Breast epithelium (tissue), 4 donors: ENCODE measurements at regions of chr14 and their contacts with region 1.

Region 1: GRCh38 chr14:29584992-29585391 is 342.7 kb downstream of the PRKD1 start:
- DNase-seq: no peak
- H3K4me3 ChIP-seq: no peak overlapping the region
- H3K27ac ChIP-seq: no peak overlapping the region
- H3K4me1 ChIP-seq: no peaks in the 10 kb centered on the region
- H3K27me3 ChIP-seq: no peaks in the 10 kb centered on the region
- CTCF ChIP-seq: no peak
- POLR2A ChIP-seq: no peak

Region 2: DNA sequence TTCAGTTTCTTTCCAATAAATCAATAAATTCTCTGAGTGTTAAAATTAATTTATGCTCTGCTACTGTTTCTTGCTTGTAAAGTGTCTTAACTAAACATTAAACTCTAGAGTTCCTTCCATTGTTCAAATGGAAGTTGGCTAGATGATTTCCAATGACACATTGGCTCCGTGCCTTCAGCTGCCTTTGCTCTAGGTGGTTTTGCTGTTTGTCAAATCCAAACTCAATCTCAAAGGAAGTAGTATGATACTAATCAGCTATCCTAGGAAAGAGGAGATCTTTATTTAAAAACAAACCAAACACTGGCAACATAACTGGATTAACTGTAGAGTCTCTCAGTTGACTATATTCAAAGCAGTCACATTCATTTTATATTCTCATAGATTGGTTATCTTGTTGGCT is 462.0 kb before region 1 on chr14:
- intact Hi-C with region 1: loop called (anchors 5 kb)
- DNase-seq: no peak
- H3K4me3 ChIP-seq: no peak overlapping the region
- H3K27ac ChIP-seq: no peak overlapping the region
- H3K4me1 ChIP-seq: no peaks in the 10 kb centered on the region
- H3K27me3 ChIP-seq: no peaks in the 10 kb centered on the region
- CTCF ChIP-seq: no peak
- POLR2A ChIP-seq: no peak